Endothelial cell of umbilical vein (primary cell): ENCODE measurements at regions of chr2 and their contacts with region 1.

Region 1: DNA sequence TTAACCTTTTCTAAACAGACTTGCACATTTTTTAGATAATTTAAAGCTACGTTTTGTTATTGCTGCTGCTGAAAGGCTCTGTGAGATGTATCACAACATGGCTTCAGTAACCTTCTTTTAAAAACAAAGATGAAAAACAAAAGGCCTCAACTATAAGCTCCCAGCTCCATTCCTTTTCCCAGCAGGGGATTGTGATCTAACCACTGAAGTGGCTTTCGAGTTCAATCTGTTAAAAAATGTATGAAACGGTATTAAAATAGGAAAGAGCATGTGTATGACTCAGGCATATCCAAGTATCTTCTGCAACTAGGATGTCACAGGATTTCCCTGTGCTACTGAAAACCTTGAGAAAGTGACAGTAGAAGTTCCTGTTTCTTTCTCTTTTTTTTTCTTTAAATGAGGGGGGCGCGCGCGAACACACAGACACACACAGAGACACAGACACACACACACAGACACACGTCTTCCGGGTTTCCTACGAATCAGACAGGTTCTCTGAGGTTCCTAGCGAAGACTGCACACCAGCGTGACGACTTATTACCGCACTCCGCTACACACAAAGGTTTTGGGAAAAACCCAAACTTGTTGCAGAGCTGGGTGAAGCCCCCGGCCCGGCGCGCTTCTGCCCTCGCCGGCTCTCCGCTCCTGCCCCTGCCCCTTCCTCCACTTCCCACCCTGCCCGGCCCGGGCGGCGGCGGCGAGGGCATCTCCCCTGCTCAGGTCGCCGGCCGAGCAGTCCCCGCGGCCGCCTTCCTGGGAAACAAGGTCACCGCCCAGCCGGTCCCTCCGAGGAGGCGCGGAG is 86.8 kb downstream of the RBMS1 start:
- DNase-seq: peak; percentile 77
- H3K4me3 ChIP-seq: peak overlapping the region; percentile 89 to 98 (median 95)
- H3K27ac ChIP-seq: peak overlapping the region; percentile 90
- H3K4me1 ChIP-seq: peaks cover 72% of the 10 kb centered on the region
- H3K27me3 ChIP-seq: no peaks in the 10 kb centered on the region
- CTCF ChIP-seq: no peak
- POLR2A ChIP-seq: peak; percentile 49

Region 2: DNA sequence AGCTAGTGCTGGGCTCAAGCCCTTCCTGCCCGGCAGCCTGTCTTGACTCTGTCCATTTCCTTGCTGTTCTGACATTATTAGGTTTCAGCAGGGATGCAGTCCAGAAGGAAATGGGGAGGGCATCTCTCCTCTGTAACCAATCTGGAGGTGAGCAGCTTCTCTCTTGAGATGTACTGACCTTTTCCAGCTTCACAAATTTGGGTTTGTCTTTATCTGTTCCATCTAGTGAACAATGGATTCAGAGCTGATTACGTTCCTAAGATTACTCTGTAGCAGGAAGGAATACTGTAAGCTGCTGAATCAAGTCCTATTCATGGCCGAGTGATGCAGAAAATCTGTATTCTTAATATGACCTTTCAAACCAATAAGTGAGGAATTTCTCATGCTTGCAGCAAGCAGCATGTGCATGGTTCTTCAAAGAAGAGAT is 355.4 kb before region 1 on chr2:
- CTCF ChIA-PET with region 1: no interaction called
- POLR2A ChIA-PET with region 1: no interaction called
- dilution Hi-C with region 1: no loop called
- intact Hi-C with region 1: no loop called
- DNase-seq: peak; percentile 53
- H3K4me3 ChIP-seq: no peak overlapping the region
- H3K27ac ChIP-seq: no peak overlapping the region
- H3K4me1 ChIP-seq: peaks cover 25% of the 10 kb centered on the region
- H3K27me3 ChIP-seq: no peaks in the 10 kb centered on the region
- CTCF ChIP-seq: no peak
- POLR2A ChIP-seq: no peak

Region 3: DNA sequence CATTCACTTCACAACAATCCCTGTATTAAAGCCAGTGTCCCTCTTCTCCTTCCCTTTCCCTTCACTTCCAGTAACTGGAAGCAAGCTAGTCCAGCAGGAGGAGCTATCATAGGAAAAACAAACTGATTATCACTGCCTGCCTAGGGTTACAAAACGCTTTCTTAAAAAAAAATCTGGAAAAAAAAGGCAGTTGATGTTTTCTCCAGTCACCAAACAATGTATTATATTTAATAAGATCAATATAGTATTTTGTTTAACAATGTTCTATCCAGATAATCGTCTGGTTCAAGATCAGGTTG is 128.0 kb before region 1 on chr2:
- CTCF ChIA-PET with region 1: no interaction called
- POLR2A ChIA-PET with region 1: no interaction called
- dilution Hi-C with region 1: no loop called
- intact Hi-C with region 1: loop called (anchors 5 kb)
- DNase-seq: peak; percentile 58
- H3K4me3 ChIP-seq: no peak overlapping the region
- H3K27ac ChIP-seq: peak overlapping the region; percentile 80
- H3K4me1 ChIP-seq: peaks cover 44% of the 10 kb centered on the region
- H3K27me3 ChIP-seq: no peaks in the 10 kb centered on the region
- CTCF ChIP-seq: peak; percentile 29 to 50
- POLR2A ChIP-seq: peak; percentile 0

Region 4: DNA sequence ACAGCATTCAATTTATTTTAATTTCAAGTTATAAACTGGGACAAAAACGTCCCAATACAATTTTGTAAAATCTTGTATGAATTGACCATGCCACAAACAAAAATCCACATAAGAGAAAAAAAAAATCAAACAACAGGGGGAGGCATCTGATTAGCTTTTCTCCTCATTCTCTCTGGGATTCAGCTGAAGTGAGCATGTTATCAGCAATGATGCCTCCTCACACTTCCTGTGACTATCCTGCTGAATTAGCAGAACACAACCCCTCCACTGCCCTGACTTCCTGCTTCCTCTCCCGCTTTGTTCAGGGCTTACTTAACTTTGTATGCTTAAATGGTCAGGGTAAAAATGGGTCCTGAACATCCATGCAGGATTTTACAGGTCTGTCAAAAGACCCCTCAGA is 74.5 kb before region 1 on chr2:
- CTCF ChIA-PET with region 1: interaction called, 5 read pairs
- POLR2A ChIA-PET with region 1: no interaction called
- dilution Hi-C with region 1: no loop called
- intact Hi-C with region 1: loop called (anchors 1 kb)
- DNase-seq: peak; percentile 70
- H3K4me3 ChIP-seq: no peak overlapping the region
- H3K27ac ChIP-seq: no peak overlapping the region
- H3K4me1 ChIP-seq: peaks cover 35% of the 10 kb centered on the region
- H3K27me3 ChIP-seq: no peaks in the 10 kb centered on the region
- CTCF ChIP-seq: peak in 1 of 2 donors; percentile 1
- POLR2A ChIP-seq: no peak

Region 5: DNA sequence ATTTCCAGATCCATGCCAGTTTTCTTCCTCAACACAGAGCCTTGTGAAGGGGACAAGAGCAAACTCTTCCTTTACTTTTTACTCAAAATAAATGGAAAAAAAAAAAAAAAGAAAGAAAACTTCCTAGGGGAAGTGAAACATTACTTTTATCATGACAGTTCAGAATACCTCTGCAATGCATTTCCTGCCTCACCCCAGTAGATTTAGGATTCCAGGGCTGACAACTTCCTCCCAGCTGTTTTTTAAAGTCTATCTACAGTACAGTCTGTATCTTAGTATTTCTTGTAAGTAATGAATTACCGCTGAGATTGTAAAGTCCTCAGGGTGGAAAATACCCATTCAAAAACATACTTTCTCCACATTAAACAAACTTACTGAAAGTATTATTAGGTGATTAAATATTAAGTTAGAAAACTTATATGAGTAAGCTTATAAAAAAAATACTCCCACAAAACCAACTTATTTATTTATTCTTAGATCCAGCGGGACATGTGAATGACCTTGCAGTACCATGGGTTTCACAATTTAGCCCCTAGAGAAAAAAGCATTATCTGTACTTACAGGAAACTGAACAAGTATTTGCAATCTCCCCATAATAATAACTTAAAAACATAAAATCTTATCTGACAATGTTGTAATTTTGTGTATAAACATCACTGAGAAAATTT is 30.9 kb before region 1 on chr2:
- CTCF ChIA-PET with region 1: interaction called, 6 read pairs
- POLR2A ChIA-PET with region 1: no interaction called
- dilution Hi-C with region 1: no loop called
- intact Hi-C with region 1: loop called (anchors 2 kb)
- DNase-seq: peak; percentile 66
- H3K4me3 ChIP-seq: peak overlapping the region in 1 of 3 experiments; percentile 22
- H3K27ac ChIP-seq: peak overlapping the region; percentile 85
- H3K4me1 ChIP-seq: peaks cover 97% of the 10 kb centered on the region
- H3K27me3 ChIP-seq: no peaks in the 10 kb centered on the region
- CTCF ChIP-seq: no peak
- POLR2A ChIP-seq: peak; percentile 58

Region 6: DNA sequence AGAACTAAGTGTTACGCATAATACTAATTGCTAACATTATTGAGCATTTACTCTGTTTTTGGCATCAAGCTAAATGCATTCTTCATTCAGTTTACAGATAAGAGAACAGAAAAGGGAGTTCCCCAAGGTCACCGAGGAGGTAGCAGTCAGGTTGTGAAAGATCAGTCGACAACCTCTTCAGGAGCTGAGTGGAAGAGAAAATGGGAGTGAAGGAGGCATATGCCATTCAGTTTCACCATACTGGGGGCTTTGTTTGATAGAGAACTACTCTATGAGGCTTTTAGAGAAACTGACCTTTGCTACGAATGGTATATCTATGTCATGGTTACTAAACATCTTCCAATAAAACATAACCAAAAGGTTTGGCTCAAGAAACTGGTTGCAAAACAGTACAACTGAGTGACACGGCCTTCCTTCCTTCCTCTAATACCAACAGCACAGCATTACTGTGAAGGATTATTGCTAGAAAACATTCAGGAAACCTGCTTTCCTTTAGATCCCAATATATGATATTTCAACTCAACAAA is 25.3 kb before region 1 on chr2:
- CTCF ChIA-PET with region 1: interaction called, 6 read pairs
- POLR2A ChIA-PET with region 1: no interaction called
- dilution Hi-C with region 1: no loop called
- intact Hi-C with region 1: loop called (anchors 2 kb)
- DNase-seq: peak; percentile 70
- H3K4me3 ChIP-seq: peak overlapping the region in 1 of 3 experiments; percentile 19
- H3K27ac ChIP-seq: peak overlapping the region; percentile 64
- H3K4me1 ChIP-seq: peaks cover 67% of the 10 kb centered on the region
- H3K27me3 ChIP-seq: no peaks in the 10 kb centered on the region
- CTCF ChIP-seq: no peak
- POLR2A ChIP-seq: no peak

Region 7: GRCh38 chr2:160417745-160418397 is 11.1 kb after region 1 on chr2:
- CTCF ChIA-PET with region 1: interaction called, 4 read pairs
- POLR2A ChIA-PET with region 1: interaction called, 3 read pairs
- dilution Hi-C with region 1: no loop called
- intact Hi-C with region 1: loop called (anchors 1 kb)
- DNase-seq: peak; percentile 84
- H3K4me3 ChIP-seq: peak overlapping the region in 1 of 3 experiments; percentile 55
- H3K27ac ChIP-seq: peak overlapping the region; percentile 97
- H3K4me1 ChIP-seq: peaks cover 51% of the 10 kb centered on the region
- H3K27me3 ChIP-seq: no peaks in the 10 kb centered on the region
- CTCF ChIP-seq: no peak
- POLR2A ChIP-seq: peak; percentile 53

Region 8: DNA sequence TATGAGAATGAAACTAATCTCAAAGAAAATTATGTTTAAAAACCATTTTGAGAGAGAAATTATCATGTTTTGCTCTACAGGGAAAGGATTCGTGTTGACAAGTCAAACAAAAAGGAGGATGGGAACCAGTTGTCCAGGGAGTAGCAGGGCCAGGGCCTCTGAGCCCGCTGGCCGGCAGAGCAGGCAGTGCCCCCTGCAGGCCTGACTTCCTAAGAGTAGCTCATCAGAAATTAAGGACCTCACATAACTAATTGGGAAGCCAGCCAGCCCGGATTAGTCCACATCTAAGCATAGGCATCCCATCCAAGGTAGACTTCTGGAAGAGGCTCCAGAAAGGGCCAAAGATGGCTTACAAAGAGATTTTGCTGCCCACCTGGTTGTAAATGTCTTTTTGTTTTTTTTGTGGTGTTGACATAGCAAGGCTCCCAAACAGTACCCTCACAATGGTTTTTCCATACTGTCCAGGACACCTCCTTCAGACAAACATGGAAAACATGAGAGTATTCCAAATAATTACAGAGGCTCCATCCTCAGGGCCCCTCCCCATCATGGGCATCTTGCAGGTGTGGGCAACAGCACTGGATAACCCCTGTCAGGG is 512.2 kb after region 1 on chr2:
- CTCF ChIA-PET with region 1: interaction called, 8 read pairs
- POLR2A ChIA-PET with region 1: no interaction called
- dilution Hi-C with region 1: no loop called
- intact Hi-C with region 1: loop called (anchors 1 kb)
- DNase-seq: peak; percentile 68
- H3K4me3 ChIP-seq: no peak overlapping the region
- H3K27ac ChIP-seq: no peak overlapping the region
- H3K4me1 ChIP-seq: peaks cover 11% of the 10 kb centered on the region
- H3K27me3 ChIP-seq: no peaks in the 10 kb centered on the region
- CTCF ChIP-seq: peak; percentile 68 to 73
- POLR2A ChIP-seq: no peak

Region 9: DNA sequence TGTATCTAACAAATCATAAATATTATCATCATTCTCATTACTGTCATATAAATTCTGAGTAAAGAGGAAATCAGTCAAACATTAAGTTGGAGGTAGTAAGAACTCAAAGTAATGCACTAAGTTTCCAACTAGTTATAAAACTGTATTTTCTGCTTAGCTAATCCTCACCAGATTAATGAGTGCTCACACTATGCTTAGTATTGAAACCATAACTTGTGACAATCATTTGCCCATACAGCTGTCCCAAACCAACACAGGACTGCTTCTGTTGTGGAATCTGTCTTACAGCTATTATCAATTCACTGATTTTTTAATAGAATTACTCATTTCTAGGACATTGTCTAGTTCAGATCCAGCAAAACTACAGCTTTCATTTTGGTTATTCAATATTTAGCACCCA is 711.9 kb after region 1 on chr2:
- CTCF ChIA-PET with region 1: no interaction called
- POLR2A ChIA-PET with region 1: no interaction called
- dilution Hi-C with region 1: no loop called
- intact Hi-C with region 1: no loop called
- DNase-seq: no peak
- H3K4me3 ChIP-seq: no peak overlapping the region
- H3K27ac ChIP-seq: no peak overlapping the region
- H3K4me1 ChIP-seq: peaks cover 18% of the 10 kb centered on the region
- H3K27me3 ChIP-seq: no peaks in the 10 kb centered on the region
- CTCF ChIP-seq: no peak
- POLR2A ChIP-seq: no peak